Activated CD8-positive, alpha-beta memory T cell treated with anti-CD3 and anti-CD28 coated beads, Interleukin-2, amount 10 ng/mL, durations not matched to agents 7 days and 5 days (primary cell): ENCODE measurements at regions of chr16 and their contacts with region 1.

Region 1: DNA sequence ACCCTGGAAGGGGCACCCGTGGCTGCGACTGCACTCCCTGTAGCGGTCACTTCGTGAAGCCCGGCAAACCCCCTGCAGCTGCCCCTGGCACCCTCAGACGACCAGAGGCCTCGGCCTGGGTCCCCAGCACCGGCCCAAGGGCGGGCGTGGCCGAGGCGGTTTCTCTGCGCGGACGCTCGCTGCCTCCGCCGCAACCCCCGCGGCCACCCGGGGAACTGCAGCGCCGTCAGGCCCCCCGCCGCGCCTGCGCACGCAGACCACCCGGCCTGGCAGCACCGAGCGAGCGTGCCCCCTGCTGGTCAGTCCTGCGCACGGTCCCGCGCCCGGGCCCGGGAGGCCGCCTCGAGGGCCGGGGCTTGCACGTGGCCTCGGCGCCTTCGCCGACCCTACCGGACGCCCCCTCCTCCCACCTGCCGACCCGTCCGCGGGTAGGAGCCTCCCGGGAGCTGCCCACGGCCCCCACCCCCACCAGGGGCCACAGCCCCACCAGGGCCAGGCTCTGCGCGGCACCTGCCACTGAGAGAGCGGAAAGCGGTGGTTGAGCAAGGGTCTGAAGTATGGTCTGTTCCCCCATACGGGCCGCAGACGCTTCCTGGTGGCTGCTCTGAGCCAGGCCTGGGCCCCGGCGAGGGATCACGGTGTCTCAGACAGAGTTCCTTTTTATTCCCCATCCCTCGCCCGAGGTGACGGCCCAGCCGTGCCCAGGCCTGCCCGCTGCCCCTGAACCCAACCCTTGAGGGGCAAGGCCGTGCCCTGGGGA is 11.5 kb upstream of the HS3ST6 start:
- DNase-seq: peak; percentile 93
- ATAC-seq: peak; percentile 95
- H3K4me3 Mint-ChIP-seq: no peak overlapping the region
- H3K27ac Mint-ChIP-seq: no peak overlapping the region
- H3K4me1 Mint-ChIP-seq: peaks cover 2% of the 10 kb centered on the region
- H3K27me3 Mint-ChIP-seq: peaks cover 8% of the 10 kb centered on the region

Region 2: DNA sequence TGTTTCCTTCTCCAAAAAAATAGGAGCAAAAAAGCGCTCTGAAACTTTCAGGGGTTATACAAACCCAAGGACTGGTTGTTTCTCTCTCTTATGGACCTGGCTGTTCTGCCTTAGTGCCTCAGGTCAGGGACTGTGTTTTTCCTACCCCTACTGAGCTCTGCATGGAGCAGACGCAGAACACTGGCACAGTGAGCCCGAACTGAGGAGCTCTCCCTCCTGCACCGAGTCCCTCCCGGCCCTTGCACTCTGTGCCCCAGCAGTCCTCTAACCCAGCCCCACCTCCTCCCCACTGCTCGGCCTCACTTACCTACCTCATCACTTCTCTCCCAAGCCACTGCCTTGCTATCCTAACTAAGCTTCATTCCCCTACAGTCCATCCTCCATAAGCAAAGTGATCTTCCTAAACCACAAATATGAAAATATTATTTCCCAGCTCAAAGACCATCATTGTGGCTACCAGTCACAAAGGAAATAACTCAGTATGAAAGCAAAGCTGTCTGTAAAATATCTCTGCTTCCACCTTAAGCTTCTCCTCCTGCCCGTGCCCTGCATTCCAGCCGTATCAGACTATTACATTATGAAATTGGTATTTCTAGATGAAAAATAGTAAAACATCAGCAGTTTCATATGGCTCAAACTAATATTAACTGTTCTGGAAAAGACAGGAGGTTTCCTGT is 71.4 kb before region 1 on chr16:
- CTCF ChIA-PET with region 1: interaction called, 11 read pairs
- DNase-seq: no peak
- ATAC-seq: no peak
- H3K4me3 Mint-ChIP-seq: no peak overlapping the region
- H3K27ac Mint-ChIP-seq: no peak overlapping the region
- H3K4me1 Mint-ChIP-seq: peaks cover 13% of the 10 kb centered on the region
- H3K27me3 Mint-ChIP-seq: peaks cover 40% of the 10 kb centered on the region

Region 3: DNA sequence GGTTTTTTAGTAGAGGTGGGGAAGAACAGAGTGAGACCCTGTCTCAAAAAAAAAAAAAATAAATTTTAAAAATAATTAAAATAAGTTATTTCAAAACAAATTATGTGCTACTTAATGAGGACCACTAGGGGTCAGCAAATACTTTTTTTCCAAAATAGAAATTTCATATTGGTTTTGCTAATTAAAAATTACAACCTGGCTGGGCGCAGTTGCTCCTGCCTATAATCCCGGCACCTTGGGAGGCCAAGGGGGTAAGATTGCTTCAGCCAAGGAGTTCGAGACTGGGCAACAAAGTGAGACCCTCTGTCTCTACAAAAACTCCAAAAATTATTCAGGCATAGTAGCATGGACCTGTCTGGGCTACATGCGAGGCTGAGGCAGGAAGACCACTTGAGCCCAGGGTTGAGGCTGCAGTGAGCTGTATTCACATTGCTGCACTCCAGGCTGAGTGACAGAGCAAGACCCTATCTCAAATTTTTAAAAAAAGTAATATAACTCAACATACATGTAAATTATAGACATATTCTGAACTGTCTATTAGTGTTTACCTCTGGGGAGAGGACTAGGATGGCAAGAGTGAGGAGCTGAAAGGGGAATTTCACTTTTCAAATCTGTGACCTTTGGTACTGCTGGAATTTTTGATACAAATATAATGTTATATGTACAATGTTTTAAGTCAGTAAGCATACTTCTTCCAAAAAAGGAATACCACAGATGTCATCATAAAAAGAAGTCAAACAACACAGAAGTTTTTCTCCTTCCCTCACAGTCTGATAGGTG is 65.9 kb before region 1 on chr16:
- CTCF ChIA-PET with region 1: interaction called, 24 read pairs
- DNase-seq: no peak
- ATAC-seq: peak; percentile 27
- H3K4me3 Mint-ChIP-seq: no peak overlapping the region
- H3K27ac Mint-ChIP-seq: no peak overlapping the region
- H3K4me1 Mint-ChIP-seq: peaks cover 4% of the 10 kb centered on the region
- H3K27me3 Mint-ChIP-seq: peaks cover 41% of the 10 kb centered on the region

Region 4: GRCh38 chr16:1941924-1942809 is 12.4 kb after region 1 on chr16:
- CTCF ChIA-PET with region 1: interaction called, 17 read pairs
- DNase-seq: no peak
- ATAC-seq: no peak
- H3K4me3 Mint-ChIP-seq: peak overlapping the region; percentile 82
- H3K27ac Mint-ChIP-seq: peak overlapping the region; percentile 78
- H3K4me1 Mint-ChIP-seq: peaks cover 26% of the 10 kb centered on the region
- H3K27me3 Mint-ChIP-seq: no peaks in the 10 kb centered on the region